GM13977 (cell line): ENCODE measurements at regions of chr11 and their contacts with region 1.

Region 1: GRCh38 chr11:124402326-124402922 is 3.6 kb upstream of the OR8B3 start:
- DNase-seq: peak; percentile 73
- CTCF ChIP-seq: peak; percentile 79

Region 2: DNA sequence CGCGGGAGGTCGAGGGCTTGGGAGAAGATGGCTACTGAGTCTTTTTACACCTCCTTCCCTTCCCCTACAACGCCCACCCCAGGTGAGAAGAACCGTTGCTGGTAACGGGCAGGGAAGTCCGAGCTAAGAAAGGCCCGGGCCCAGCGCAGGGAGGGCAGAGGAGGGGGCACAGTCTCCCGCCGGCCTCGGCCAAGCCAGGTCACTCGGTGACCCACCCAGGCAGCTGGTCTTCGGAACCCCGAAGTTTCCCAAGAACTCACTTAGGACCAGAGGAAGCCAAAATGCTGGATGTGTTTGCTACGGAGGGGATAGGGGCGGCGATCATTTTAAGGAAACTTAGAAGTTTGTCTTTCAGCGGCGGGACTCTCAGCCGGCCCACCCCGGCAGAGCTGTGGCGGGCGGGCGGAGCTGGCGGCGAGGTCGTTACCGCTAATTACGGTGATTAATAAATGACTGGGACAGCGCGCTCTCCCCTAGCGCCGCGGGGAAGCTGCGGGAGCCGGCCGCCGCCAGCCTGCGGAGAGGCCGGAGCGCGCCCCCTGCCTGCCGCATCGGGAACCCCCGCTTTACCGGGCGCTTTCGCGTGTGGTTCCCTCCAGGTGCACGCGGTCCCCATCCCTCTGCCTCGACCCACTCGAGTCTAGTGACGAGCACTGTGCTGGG is 463.6 kb after region 1 on chr11:
- in situ Hi-C with region 1: loop called (anchors 25 kb)
- DNase-seq: peak; percentile 77
- CTCF ChIP-seq: peak; percentile 67